ENCODE measurements at regions of chr5 and their contacts with region 1.

Region 1: DNA sequence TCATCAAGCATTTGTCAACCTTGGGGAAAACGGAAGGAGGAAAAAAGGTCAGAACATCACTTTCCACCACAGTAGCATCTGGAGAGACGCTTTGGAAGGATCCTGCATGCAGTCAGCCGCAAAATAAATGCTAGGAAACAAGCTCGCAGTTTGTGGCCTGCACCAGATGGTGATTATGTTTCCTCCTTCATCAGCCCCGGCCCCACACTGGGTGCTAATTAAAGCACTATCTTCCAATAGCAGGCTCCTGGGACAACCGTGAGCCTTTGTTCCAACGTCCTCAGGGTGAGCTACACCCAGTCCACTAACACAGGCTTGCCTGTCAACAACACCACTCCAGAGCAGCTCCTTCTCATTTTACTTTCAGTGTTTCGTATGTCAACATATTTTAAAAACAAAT is 64.0 kb downstream of the RNF130 start:
- DNase-seq: no peak
- ATAC-seq: no peak
- H3K4me3 ChIP-seq: no peak overlapping the region
- H3K27ac ChIP-seq: no peak overlapping the region
- H3K4me1 ChIP-seq: no peaks in the 10 kb centered on the region
- H3K27me3 ChIP-seq: no peaks in the 10 kb centered on the region
- CTCF ChIP-seq: no peak

Region 2: GRCh38 chr5:179994583-179995323 is 12.8 kb before region 1 on chr5:
- CTCF ChIA-PET with region 1: no interaction called
- POLR2A ChIA-PET with region 1: no interaction called
- in situ Hi-C with region 1: no loop called
- intact Hi-C with region 1: no loop called
- DNase-seq: no peak
- ATAC-seq: no peak
- H3K4me3 ChIP-seq: no peak overlapping the region
- H3K27ac ChIP-seq: no peak overlapping the region
- H3K4me1 ChIP-seq: no peaks in the 10 kb centered on the region
- H3K27me3 ChIP-seq: no peaks in the 10 kb centered on the region
- CTCF ChIP-seq: no peak

Region 3: DNA sequence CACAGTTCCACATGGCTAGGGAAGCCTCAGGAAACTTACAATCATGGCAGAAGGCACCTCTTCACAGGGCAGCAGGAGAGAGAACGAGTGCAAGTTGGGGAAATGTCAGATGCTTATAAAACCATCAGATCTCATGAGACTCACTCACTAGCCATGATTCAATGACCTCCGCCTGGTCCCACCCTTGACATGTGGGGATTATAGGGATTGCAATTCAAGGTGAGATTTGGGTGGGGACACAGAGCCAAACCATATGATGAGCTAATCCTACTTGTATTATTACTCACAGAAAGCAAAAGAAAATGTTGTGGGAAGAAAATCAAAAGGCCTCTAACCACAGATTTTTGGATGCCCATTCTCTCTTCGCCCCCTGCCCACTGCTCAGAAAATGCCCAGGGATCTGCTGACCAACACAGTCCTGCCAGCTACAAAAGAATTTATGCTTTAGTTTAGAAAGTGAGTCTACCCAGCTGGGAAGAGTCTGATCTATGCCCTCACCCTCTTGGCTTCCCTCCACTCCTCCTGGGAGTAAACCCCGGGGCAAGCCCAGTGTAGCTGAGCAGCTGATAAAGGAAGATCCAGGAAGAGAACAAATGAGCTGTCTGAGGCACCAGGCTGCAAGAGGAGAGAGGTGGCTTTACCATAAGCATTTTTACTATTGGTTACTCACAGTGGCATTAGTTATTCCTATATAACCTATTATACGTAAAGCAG is 10.9 kb after region 1 on chr5:
- CTCF ChIA-PET with region 1: interaction called, 10 read pairs
- POLR2A ChIA-PET with region 1: no interaction called
- in situ Hi-C with region 1: no loop called
- intact Hi-C with region 1: no loop called
- DNase-seq: no peak
- ATAC-seq: no peak
- H3K4me3 ChIP-seq: no peak overlapping the region
- H3K27ac ChIP-seq: no peak overlapping the region
- H3K4me1 ChIP-seq: no peaks in the 10 kb centered on the region
- H3K27me3 ChIP-seq: no peaks in the 10 kb centered on the region
- CTCF ChIP-seq: no peak